Activated CD8-positive, alpha-beta T cell treated with anti-CD3 and anti-CD28 coated beads for 36 hours (primary cell): ENCODE measurements at regions of chr7 and their contacts with region 1.

Region 1: GRCh38 chr7:98021588-98022351 is 31.8 kb upstream of the OCM2 start:
- DNase-seq: peak; percentile 90
- ATAC-seq: peak; percentile 95
- H3K4me3 Mint-ChIP-seq: no peak overlapping the region
- H3K27ac Mint-ChIP-seq: no peak overlapping the region
- H3K4me1 Mint-ChIP-seq: peaks cover 4% of the 10 kb centered on the region
- H3K27me3 Mint-ChIP-seq: peaks cover 5% of the 10 kb centered on the region
- CTCF ChIP-seq: peak; percentile 90

Region 2: DNA sequence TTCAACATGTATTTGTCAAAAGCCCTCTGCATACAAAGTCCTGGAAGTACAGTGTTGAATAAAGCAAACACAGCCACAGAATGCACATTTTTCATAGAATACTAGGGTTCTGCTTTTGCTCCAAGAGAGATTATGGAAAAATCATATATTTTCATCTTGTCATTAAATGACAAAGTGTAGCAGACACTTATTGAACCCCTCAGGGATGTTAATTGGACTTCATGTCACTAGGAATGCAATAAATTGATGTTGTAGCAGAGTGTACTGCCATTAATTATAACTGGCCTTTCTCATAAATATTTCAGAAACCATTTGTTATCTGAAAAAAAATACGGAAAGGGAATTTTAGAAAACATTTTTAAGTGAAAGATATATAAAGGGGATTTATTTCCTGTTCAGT is 354.4 kb before region 1 on chr7:
- CTCF ChIA-PET with region 1: no interaction called
- POLR2A ChIA-PET with region 1: no interaction called
- intact Hi-C with region 1: no loop called
- DNase-seq: no peak
- ATAC-seq: no peak
- H3K4me3 Mint-ChIP-seq: no peak overlapping the region
- H3K27ac Mint-ChIP-seq: no peak overlapping the region
- H3K4me1 Mint-ChIP-seq: no peaks in the 10 kb centered on the region
- H3K27me3 Mint-ChIP-seq: peaks cover 2% of the 10 kb centered on the region
- CTCF ChIP-seq: no peak

Region 3: DNA sequence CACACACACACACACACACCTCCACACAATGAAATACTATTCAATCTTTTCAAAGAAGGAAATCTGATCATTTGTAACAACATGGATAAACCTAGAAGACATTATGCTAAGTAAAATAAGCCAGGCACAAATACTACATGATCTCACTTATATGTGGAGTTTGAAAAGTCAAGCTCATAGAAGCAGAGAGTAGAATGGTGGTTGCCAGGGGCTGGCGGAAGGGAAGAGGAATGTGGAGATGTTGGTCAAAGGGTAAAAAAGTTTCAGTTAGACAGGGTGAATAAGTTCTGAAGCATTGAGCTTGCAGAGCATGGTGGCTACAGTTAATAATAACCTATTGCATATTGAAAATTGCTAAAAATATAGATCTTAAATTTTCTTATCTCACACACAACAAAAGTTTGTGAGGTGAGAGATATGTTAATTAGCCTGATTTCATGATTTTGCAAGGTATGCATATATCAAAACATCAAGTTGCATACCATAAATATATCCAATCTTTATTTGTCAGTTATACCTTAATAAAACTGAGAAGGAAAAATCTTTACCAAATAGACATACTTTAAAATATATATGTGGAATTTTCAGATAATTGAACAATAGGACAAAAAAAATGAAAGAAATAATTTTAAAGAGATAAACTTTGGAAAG is 273.4 kb before region 1 on chr7:
- CTCF ChIA-PET with region 1: no interaction called
- POLR2A ChIA-PET with region 1: no interaction called
- intact Hi-C with region 1: no loop called
- DNase-seq: no peak
- ATAC-seq: no peak
- H3K4me3 Mint-ChIP-seq: no peak overlapping the region
- H3K27ac Mint-ChIP-seq: no peak overlapping the region
- H3K4me1 Mint-ChIP-seq: no peaks in the 10 kb centered on the region
- H3K27me3 Mint-ChIP-seq: peaks cover 2% of the 10 kb centered on the region
- CTCF ChIP-seq: no peak

Region 4: DNA sequence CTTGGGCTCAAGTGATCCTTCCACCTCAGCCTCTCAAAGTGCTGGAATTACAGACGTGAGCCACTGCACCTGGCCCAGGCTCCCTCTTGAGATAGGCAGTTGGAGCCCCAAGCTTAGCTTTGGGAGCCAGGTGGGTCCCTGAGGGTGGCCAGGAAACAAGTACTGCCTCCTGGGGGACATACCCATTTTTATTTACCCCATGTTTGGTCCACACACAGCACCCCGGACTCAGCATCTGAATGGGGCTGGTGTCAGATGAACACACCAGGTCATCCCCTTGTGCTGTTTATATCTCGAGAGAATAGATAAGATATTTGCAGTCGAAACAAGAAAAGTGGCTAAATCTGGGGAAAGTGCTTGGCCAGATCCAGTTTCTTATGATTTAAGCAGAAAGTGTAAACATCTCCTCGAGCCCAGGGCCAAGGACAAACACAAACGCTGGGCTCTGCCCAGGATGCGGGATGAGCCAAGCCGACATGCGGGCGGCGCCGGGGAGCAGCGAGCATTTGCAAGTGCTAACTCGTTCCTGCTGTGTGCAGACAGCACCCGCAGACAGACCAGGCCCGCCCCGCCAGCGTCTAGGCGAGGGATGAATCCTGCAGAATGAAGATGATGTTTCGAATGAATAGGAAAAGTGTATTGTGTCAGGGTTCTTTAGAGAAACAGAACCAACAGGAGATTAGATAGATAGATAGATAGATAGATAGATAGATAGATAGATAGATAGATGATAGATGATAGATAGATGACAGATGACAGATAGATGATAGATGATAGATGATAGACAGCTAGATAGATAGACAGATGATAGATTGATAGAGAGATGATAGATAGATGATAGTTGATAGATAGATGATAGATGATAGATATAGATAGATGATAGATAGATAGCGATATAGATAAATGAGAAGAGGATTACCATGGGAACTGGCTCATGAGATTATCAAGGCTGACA is 12.6 kb after region 1 on chr7:
- CTCF ChIA-PET with region 1: interaction called, 16 read pairs
- POLR2A ChIA-PET with region 1: no interaction called
- intact Hi-C with region 1: no loop called
- DNase-seq: no peak
- ATAC-seq: no peak
- H3K4me3 Mint-ChIP-seq: no peak overlapping the region
- H3K27ac Mint-ChIP-seq: no peak overlapping the region
- H3K4me1 Mint-ChIP-seq: no peaks in the 10 kb centered on the region
- H3K27me3 Mint-ChIP-seq: peaks cover 4% of the 10 kb centered on the region
- CTCF ChIP-seq: no peak

Region 5: DNA sequence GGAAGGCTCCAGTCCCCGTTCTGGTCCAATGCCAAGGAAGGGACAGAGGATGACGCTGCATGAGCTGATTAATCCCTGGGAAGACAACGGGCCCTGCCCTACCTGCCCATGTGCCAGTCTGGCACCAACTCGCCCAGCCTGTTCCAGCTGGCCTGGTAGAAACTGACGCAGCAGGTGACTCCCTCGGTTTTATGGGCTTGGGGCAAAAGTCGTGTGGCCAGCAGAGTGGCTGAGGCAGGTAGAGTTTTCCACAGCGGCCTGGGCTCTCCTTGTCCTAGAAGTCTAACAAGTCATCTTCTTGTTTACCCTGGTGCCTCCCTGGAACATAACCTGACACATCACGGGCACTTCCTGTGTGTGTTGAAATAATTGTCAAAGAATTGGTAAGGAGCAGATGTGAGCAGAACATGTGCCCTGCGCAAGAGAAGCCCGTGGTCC is 64.5 kb after region 1 on chr7:
- CTCF ChIA-PET with region 1: no interaction called
- POLR2A ChIA-PET with region 1: no interaction called
- intact Hi-C with region 1: loop called (anchors 10 kb)
- DNase-seq: no peak
- ATAC-seq: no peak
- H3K4me3 Mint-ChIP-seq: no peak overlapping the region
- H3K27ac Mint-ChIP-seq: no peak overlapping the region
- H3K4me1 Mint-ChIP-seq: no peaks in the 10 kb centered on the region
- H3K27me3 Mint-ChIP-seq: peaks cover 3% of the 10 kb centered on the region
- CTCF ChIP-seq: no peak

Region 6: DNA sequence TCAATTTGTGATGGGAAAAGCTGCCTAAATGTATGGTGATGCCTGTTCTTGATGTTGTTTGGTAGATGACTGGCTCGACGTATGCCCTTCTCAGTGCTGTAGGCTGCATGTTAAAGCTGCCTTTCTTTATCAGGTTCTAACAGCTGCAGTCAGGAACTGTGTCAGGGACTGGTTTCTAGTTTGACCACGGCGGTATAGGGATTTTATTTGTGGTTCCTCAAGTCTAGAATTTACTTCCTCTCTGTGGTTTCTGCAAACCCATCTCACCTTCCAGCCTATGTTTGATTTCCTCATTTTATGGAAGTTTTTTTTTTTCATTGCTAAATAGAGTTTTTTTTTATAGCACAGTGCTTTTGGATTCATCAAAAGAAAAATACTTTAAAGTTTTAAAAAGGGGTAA is 111.4 kb after region 1 on chr7:
- CTCF ChIA-PET with region 1: interaction called, 16 read pairs
- POLR2A ChIA-PET with region 1: no interaction called
- intact Hi-C with region 1: no loop called
- DNase-seq: peak; percentile 50
- ATAC-seq: peak; percentile 43
- H3K4me3 Mint-ChIP-seq: peak overlapping the region; percentile 41
- H3K27ac Mint-ChIP-seq: peak overlapping the region; percentile 57
- H3K4me1 Mint-ChIP-seq: peaks cover 49% of the 10 kb centered on the region
- H3K27me3 Mint-ChIP-seq: peaks cover 2% of the 10 kb centered on the region
- CTCF ChIP-seq: no peak

Region 7: DNA sequence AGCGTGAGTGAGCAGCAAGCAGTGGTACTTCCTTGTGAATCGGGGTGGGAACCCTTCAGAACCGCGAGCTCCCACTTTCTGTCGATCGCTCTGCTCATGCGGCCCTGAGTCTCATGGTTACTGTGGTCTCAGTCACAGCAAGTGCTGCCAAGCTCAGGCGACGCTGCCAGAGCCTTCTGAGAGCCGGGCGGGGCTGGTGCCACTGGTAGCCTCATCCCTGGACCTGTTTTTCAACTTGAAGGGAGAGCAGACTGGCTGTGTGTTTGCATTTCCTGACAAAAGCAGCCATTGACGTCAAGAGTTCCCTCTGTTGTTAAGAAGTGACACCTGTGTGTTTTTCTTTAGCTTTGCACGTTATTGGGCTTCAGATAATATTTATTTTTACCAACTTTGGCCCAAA is 156.6 kb after region 1 on chr7:
- CTCF ChIA-PET with region 1: interaction called, 23 read pairs
- POLR2A ChIA-PET with region 1: no interaction called
- intact Hi-C with region 1: no loop called
- DNase-seq: no peak
- ATAC-seq: no peak
- H3K4me3 Mint-ChIP-seq: no peak overlapping the region
- H3K27ac Mint-ChIP-seq: no peak overlapping the region
- H3K4me1 Mint-ChIP-seq: no peaks in the 10 kb centered on the region
- H3K27me3 Mint-ChIP-seq: no peaks in the 10 kb centered on the region
- CTCF ChIP-seq: no peak

Region 8: DNA sequence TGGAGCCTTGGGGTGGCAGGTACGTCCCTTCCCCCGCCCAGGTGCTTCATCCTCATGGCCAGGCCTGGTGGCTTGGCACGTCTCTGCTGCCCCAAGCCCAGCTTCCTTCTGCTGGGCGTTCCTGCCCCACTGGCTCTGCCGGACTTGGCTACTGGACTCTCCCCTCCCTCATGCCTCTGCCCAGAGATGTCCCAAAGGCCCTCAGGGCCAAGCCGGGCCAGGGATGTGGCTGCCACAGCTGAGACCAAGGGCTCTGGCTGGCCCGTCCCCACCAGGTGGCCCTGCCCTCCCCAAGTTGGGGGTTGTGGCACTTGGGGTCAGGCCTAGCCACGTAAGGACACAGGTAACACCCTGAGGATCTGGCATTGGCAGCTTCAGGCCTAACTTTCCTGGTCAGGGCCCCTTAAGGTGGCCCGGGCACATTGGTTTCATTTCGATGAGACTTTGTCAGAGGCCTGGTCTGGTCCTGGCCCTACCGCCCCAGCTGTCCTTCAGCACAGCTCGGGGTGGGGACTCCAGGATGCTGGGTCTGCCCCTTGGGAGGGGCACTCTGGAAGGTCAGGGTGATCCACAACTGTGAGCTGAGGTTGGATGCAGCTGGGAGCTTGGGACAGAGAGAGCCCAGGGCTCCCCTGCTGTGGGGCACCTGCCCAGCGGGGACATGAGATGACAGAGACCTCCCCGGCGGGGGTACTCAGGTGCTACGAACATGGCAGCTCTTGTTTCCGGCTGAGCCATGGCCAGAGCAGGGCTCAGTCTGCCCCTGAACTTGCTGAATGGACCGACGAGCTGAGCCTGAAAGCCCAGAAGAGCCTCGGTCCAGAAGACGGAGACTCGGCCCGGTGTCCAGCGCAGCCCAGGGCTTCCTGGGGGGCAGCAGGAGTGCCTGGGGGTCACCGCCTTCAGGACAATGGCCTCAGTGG is 192.4 kb after region 1 on chr7:
- CTCF ChIA-PET with region 1: no interaction called
- POLR2A ChIA-PET with region 1: no interaction called
- intact Hi-C with region 1: no loop called
- DNase-seq: no peak
- ATAC-seq: no peak
- H3K4me3 Mint-ChIP-seq: no peak overlapping the region
- H3K27ac Mint-ChIP-seq: no peak overlapping the region
- H3K4me1 Mint-ChIP-seq: peaks cover 12% of the 10 kb centered on the region
- H3K27me3 Mint-ChIP-seq: no peaks in the 10 kb centered on the region
- CTCF ChIP-seq: no peak

Region 9: GRCh38 chr7:98531717-98532116 is 509.9 kb after region 1 on chr7:
- CTCF ChIA-PET with region 1: no interaction called
- POLR2A ChIA-PET with region 1: no interaction called
- intact Hi-C with region 1: no loop called
- DNase-seq: no peak
- ATAC-seq: no peak
- H3K4me3 Mint-ChIP-seq: no peak overlapping the region
- H3K27ac Mint-ChIP-seq: no peak overlapping the region
- H3K4me1 Mint-ChIP-seq: no peaks in the 10 kb centered on the region
- H3K27me3 Mint-ChIP-seq: no peaks in the 10 kb centered on the region
- CTCF ChIP-seq: no peak